ENCODE measurements at regions of chr16 and their contacts with region 1.

Region 1: GRCh38 chr16:46555951-46556350 is 65.2 kb downstream of the SHCBP1 start:
- DNase-seq: peak; percentile 44
- ATAC-seq: peak; percentile 61
- H3K4me3 ChIP-seq: no peak overlapping the region
- H3K27ac ChIP-seq: no peak overlapping the region
- H3K4me1 ChIP-seq: no peaks in the 10 kb centered on the region
- H3K27me3 ChIP-seq: no peaks in the 10 kb centered on the region
- CTCF ChIP-seq: no peak

Region 2: DNA sequence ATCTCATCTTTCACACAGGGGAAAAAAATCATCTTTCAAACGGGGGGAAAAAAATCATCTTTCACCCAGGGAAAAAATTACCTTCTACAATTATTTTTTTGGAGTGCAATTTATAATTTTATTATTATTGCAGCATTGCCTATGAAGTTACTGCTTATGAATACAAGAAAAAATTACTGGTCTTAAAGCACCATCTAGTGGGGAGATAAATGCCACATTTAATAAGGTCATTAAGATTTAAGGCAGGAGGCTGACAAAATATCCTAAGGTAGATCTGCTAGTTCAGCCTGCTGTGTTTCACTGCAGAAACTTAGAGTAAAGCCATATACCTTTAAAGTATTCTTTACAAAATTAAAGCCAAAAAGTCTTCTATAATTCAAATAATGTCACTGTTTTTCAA is 51.6 kb after region 1 on chr16:
- CTCF ChIA-PET with region 1: no interaction called
- POLR2A ChIA-PET with region 1: no interaction called
- intact Hi-C with region 1: loop called (anchors 1 kb)
- DNase-seq: peak; percentile 57
- ATAC-seq: peak; percentile 57
- H3K4me3 ChIP-seq: no peak overlapping the region
- H3K27ac ChIP-seq: no peak overlapping the region
- H3K4me1 ChIP-seq: no peaks in the 10 kb centered on the region
- H3K27me3 ChIP-seq: no peaks in the 10 kb centered on the region
- CTCF ChIP-seq: peak; percentile 49; the same call in 1 of the 2 replicates

Region 3: GRCh38 chr16:46658925-46659324 is 103.0 kb after region 1 on chr16:
- CTCF ChIA-PET with region 1: no interaction called
- POLR2A ChIA-PET with region 1: no interaction called
- intact Hi-C with region 1: no loop called
- DNase-seq: no peak
- ATAC-seq: no peak
- H3K4me3 ChIP-seq: no peak overlapping the region
- H3K27ac ChIP-seq: no peak overlapping the region
- H3K4me1 ChIP-seq: no peaks in the 10 kb centered on the region
- H3K27me3 ChIP-seq: no peaks in the 10 kb centered on the region
- CTCF ChIP-seq: no peak

Measured in PC-3 (cell line).